Naive thymus-derived CD4-positive, alpha-beta T cell (primary cell): ENCODE measurements at regions of chr6 and their contacts with region 1.

Region 1: GRCh38 chr6:161370880-161371279 is 97.0 kb upstream of the AGPAT4 start:
- DNase-seq: peak; percentile 37 to 66 (median 58)
- ATAC-seq: peak; percentile 81
- H3K4me3 ChIP-seq: no peak overlapping the region
- H3K4me3 Mint-ChIP-seq: no peak overlapping the region
- H3K27ac ChIP-seq: no peak overlapping the region
- H3K27ac Mint-ChIP-seq: peak overlapping the region in 1 of 9 donors; percentile 5
- H3K4me1 ChIP-seq: no peaks in the 10 kb centered on the region
- H3K4me1 Mint-ChIP-seq: peaks cover 0 to 3% (median 0%) of the 10 kb centered on the region in 7 donors
- H3K27me3 ChIP-seq: no peaks in the 10 kb centered on the region
- H3K27me3 Mint-ChIP-seq: no peaks in the 10 kb centered on the region

Region 2: DNA sequence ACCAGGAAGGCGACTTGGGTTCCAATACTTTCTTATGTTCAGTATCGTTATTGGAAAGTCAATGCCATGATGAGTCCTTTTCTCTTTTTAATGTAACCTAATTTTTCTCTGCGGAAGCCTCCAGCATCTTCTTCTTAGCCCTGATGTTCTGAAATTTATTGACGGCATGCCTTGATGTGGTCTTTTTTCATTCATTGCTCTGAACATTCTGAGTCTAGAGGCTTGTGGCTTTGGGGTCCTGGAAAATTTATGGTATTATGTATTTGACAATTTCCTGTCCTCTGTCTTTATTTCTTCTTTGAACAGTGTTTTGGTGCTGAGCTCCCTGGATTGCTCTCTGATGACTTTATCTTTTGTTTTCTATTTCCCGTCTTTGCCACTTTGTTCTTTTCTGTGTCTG is 1508.8 kb before region 1 on chr6:
- CTCF ChIA-PET with region 1: no interaction called
- POLR2A ChIA-PET with region 1: no interaction called
- intact Hi-C with region 1: loop called in 1 of 2 experiments (anchors 2 kb)
- DNase-seq: peak in 7 of 9 donors; percentile 46 to 77 (median 69)
- ATAC-seq: peak; percentile 77
- H3K4me3 ChIP-seq: no peak overlapping the region
- H3K4me3 Mint-ChIP-seq: peak overlapping the region; percentile 1 to 75 (median 50)
- H3K27ac ChIP-seq: peak overlapping the region; percentile 4
- H3K27ac Mint-ChIP-seq: peak overlapping the region in 8 of 9 donors; percentile 11 to 83 (median 65)
- H3K4me1 ChIP-seq: peaks cover 0 to 20% of the 10 kb centered on the region in 2 donors
- H3K4me1 Mint-ChIP-seq: peaks cover 14 to 29% (median 25%) of the 10 kb centered on the region in 7 donors
- H3K27me3 ChIP-seq: peaks cover 0 to 7% of the 10 kb centered on the region in 2 donors
- H3K27me3 Mint-ChIP-seq: peaks cover 0 to 17% (median 0%) of the 10 kb centered on the region in 5 donors

Region 3: GRCh38 chr6:160520043-160520904 is 850.6 kb before region 1 on chr6:
- CTCF ChIA-PET with region 1: interaction called, 7 read pairs
- POLR2A ChIA-PET with region 1: no interaction called
- intact Hi-C with region 1: loop called (anchors 1 to 5 kb)
- DNase-seq: peak; percentile 47 to 81 (median 69)
- ATAC-seq: peak; percentile 82
- H3K4me3 ChIP-seq: peak overlapping the region; percentile 75
- H3K4me3 Mint-ChIP-seq: peak overlapping the region; percentile 91 to 97 (median 95)
- H3K27ac ChIP-seq: peak overlapping the region; percentile 70
- H3K27ac Mint-ChIP-seq: peak overlapping the region; percentile 81 to 96 (median 87)
- H3K4me1 ChIP-seq: peaks cover 0 to 14% of the 10 kb centered on the region in 2 donors
- H3K4me1 Mint-ChIP-seq: peaks cover 13 to 32% (median 24%) of the 10 kb centered on the region in 7 donors
- H3K27me3 ChIP-seq: no peaks in the 10 kb centered on the region
- H3K27me3 Mint-ChIP-seq: peaks cover 0 to 59% (median 0%) of the 10 kb centered on the region in 5 donors

Region 4: DNA sequence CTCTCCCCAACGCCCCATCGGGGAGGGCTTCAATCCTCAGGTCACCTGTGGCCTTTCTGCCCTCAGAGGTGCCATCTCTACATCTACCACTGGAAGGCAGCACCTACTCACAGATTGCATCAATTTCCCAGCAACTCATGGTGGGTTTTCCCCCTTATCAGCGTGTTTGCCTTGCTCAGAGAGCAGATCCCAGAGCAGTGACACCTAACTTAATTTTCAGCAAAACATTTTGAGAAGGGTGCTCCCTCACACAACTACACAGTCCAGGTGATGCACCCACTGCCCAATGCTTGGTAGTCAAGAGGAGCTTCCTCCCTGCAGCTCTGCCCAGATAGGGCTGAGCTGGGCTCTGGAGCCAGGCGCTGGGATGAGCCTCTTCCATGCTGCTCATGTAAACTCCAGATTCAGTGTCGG is 620.6 kb before region 1 on chr6:
- CTCF ChIA-PET with region 1: no interaction called
- POLR2A ChIA-PET with region 1: no interaction called
- intact Hi-C with region 1: loop called (anchors 5 kb)
- DNase-seq: no peak
- ATAC-seq: no peak
- H3K4me3 ChIP-seq: no peak overlapping the region
- H3K4me3 Mint-ChIP-seq: no peak overlapping the region
- H3K27ac ChIP-seq: no peak overlapping the region
- H3K27ac Mint-ChIP-seq: no peak overlapping the region
- H3K4me1 ChIP-seq: no peaks in the 10 kb centered on the region
- H3K4me1 Mint-ChIP-seq: no peaks in the 10 kb centered on the region
- H3K27me3 ChIP-seq: no peaks in the 10 kb centered on the region
- H3K27me3 Mint-ChIP-seq: peaks cover 3 to 29% (median 13%) of the 10 kb centered on the region in 5 donors

Region 5: DNA sequence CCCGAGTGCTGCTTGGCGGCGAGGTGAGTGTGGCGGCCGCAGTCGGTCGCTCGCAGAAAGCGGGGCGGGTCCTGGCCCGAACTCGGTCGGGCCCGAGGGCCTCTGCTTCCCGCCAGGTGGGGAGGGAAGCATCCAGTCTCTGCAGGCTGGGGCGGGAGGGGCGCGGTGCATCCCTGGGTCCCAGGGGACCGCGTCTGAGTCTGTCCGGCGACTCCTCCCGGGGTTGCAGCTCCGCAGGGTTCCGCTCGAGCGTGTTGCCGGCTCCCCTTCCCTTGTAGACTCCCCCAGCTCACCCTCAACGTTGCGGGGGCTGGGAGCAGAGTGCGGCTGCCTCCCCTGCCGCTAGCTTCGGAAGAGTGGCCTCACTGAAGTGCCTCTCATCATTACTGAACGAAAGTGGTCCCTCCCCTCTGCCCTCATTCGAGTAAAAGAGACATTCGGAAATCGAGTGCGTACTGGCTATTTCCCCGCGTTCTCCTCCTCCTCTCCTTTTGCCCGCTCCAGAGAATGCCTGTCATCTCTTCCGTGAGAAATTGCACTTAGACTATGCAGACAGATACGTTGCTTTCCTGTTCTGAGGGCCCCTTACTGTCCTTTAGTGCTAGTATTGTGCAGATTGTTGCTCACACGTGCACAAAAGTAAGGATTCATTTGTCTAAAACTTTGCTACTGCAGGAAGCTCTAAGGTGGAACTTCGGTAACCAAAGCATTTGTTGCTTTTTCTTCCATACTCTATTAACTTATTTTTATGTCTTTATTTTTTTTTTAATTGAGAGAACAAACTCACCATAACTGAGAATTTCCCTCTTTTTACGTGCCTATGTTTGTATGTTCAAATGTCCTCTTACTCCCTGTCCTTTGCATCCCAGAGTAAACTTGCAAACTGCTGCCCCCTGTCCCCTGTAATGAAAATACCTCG is 378.6 kb before region 1 on chr6:
- CTCF ChIA-PET with region 1: interaction called, 8 read pairs
- POLR2A ChIA-PET with region 1: no interaction called
- intact Hi-C with region 1: loop called (anchors 1 to 2 kb)
- DNase-seq: peak in 7 of 9 donors; percentile 17 to 65 (median 47)
- ATAC-seq: peak; percentile 63
- H3K4me3 ChIP-seq: peak overlapping the region; percentile 94
- H3K4me3 Mint-ChIP-seq: peak overlapping the region; percentile 90 to 99 (median 93)
- H3K27ac ChIP-seq: peak overlapping the region; percentile 76
- H3K27ac Mint-ChIP-seq: peak overlapping the region; percentile 83 to 97 (median 93)
- H3K4me1 ChIP-seq: peaks cover 9 to 14% of the 10 kb centered on the region in 2 donors
- H3K4me1 Mint-ChIP-seq: peaks cover 19 to 60% (median 45%) of the 10 kb centered on the region in 7 donors
- H3K27me3 ChIP-seq: no peaks in the 10 kb centered on the region
- H3K27me3 Mint-ChIP-seq: peaks cover 0 to 30% (median 0%) of the 10 kb centered on the region in 5 donors

Region 6: GRCh38 chr6:161152907-161153662 is 217.8 kb before region 1 on chr6:
- CTCF ChIA-PET with region 1: interaction called, 3 read pairs
- POLR2A ChIA-PET with region 1: no interaction called
- intact Hi-C with region 1: loop called in 1 of 2 experiments (anchors 1 kb)
- DNase-seq: no peak
- ATAC-seq: peak; percentile 38
- H3K4me3 ChIP-seq: no peak overlapping the region
- H3K4me3 Mint-ChIP-seq: no peak overlapping the region
- H3K27ac ChIP-seq: no peak overlapping the region
- H3K27ac Mint-ChIP-seq: no peak overlapping the region
- H3K4me1 ChIP-seq: no peaks in the 10 kb centered on the region
- H3K4me1 Mint-ChIP-seq: no peaks in the 10 kb centered on the region
- H3K27me3 ChIP-seq: no peaks in the 10 kb centered on the region
- H3K27me3 Mint-ChIP-seq: no peaks in the 10 kb centered on the region

Region 7: DNA sequence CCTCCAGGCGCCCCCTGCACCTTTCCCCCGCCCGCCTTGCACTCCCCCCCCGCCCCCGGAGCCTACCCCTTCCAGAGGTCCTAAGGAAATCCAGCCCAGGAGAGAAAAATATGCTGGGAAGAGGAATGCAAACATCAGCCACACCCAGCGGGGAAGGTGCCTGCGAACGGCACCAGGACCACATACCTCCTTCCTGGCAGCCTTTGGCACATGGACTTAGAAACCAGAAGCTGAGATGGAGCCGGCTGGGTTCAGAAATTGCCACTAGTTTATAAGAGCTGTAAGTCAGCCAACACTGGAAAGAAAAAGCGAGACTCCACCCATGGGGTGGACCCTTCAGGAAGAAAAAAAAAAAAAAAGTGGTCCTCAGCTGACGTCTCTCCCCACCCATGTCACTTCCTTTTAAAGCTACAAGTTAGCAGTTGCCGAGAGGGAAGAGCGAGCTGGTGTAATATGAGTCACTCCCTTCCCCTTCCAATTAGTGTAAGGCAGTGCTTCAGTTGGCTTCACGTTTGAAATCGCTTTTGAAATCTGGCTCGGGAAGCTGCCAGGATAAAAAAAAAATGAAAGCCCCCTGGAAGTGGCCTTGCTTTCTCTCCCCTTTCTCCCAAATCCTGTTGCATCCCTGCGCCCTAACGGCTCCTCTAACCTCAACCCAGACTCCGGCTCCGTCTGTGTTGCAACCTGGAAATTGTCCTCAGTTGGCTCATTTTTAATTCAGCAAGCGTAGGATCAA is 97.0 kb before region 1 on chr6 and contains the start of gene AGPAT4:
- CTCF ChIA-PET with region 1: no interaction called
- POLR2A ChIA-PET with region 1: no interaction called
- intact Hi-C with region 1: loop called (anchors 2 kb)
- DNase-seq: peak; percentile 31 to 85 (median 78)
- ATAC-seq: peak; percentile 96
- H3K4me3 ChIP-seq: peak within 1 kb of the TSS; percentile 46
- H3K4me3 Mint-ChIP-seq: peak within 1 kb of the TSS; percentile 82 to 98 (median 94)
- H3K27ac ChIP-seq: peak within 1 kb of the TSS; percentile 66
- H3K27ac Mint-ChIP-seq: peak within 1 kb of the TSS; percentile 87 to 98 (median 94)
- H3K4me1 ChIP-seq: peaks cover 0 to 6% of the 10 kb centered on the region in 2 donors
- H3K4me1 Mint-ChIP-seq: peaks cover 10 to 31% (median 19%) of the 10 kb centered on the region in 7 donors
- H3K27me3 ChIP-seq: no peaks in the 10 kb centered on the region
- H3K27me3 Mint-ChIP-seq: peaks cover 0 to 15% (median 0%) of the 10 kb centered on the region in 5 donors
- total RNA-seq, gene AGPAT4: 2.0 to 16.2 (median 4.4) TPM

Region 8: GRCh38 chr6:161476711-161477110 is 105.8 kb after region 1 on chr6:
- CTCF ChIA-PET with region 1: no interaction called
- POLR2A ChIA-PET with region 1: no interaction called
- intact Hi-C with region 1: no loop called
- DNase-seq: no peak
- ATAC-seq: no peak
- H3K4me3 ChIP-seq: no peak overlapping the region
- H3K4me3 Mint-ChIP-seq: no peak overlapping the region
- H3K27ac ChIP-seq: no peak overlapping the region
- H3K27ac Mint-ChIP-seq: no peak overlapping the region
- H3K4me1 ChIP-seq: no peaks in the 10 kb centered on the region
- H3K4me1 Mint-ChIP-seq: no peaks in the 10 kb centered on the region
- H3K27me3 ChIP-seq: no peaks in the 10 kb centered on the region
- H3K27me3 Mint-ChIP-seq: peaks cover 0 to 2% (median 0%) of the 10 kb centered on the region in 5 donors